Heart right ventricle (tissue), 16 donors: ENCODE measurements at regions of chr1 and their contacts with region 1.

Region 1: GRCh38 chr1:212512731-212513559 is 80.2 kb downstream of the NENF start:
- DNase-seq: no peak
- ATAC-seq: no peak
- H3K4me3 ChIP-seq: no peak overlapping the region
- H3K27ac ChIP-seq: no peak overlapping the region
- H3K4me1 ChIP-seq: peaks cover 6 to 21% (median 16%) of the 10 kb centered on the region in 9 donors
- H3K27me3 ChIP-seq: peaks cover 0 to 62% (median 25%) of the 10 kb centered on the region in 7 donors
- CTCF ChIP-seq: no peak

Region 2: GRCh38 chr1:212558693-212559480 is 45.9 kb after region 1 on chr1:
- intact Hi-C with region 1: loop called in 1 of 10 experiments (anchors 1 kb)
- DNase-seq: peak; percentile 94
- ATAC-seq: peak; percentile 93 to 98 (median 96)
- H3K4me3 ChIP-seq: peak overlapping the region; percentile 49 to 96 (median 73)
- H3K27ac ChIP-seq: peak overlapping the region; percentile 85 to 99 (median 98)
- H3K4me1 ChIP-seq: peaks cover 0 to 26% (median 13%) of the 10 kb centered on the region in 9 donors
- H3K27me3 ChIP-seq: no peaks in the 10 kb centered on the region
- CTCF ChIP-seq: no peak